CD4-positive, alpha-beta memory T cell (primary cell): ENCODE measurements at regions of chr7 and their contacts with region 1.

Region 1: DNA sequence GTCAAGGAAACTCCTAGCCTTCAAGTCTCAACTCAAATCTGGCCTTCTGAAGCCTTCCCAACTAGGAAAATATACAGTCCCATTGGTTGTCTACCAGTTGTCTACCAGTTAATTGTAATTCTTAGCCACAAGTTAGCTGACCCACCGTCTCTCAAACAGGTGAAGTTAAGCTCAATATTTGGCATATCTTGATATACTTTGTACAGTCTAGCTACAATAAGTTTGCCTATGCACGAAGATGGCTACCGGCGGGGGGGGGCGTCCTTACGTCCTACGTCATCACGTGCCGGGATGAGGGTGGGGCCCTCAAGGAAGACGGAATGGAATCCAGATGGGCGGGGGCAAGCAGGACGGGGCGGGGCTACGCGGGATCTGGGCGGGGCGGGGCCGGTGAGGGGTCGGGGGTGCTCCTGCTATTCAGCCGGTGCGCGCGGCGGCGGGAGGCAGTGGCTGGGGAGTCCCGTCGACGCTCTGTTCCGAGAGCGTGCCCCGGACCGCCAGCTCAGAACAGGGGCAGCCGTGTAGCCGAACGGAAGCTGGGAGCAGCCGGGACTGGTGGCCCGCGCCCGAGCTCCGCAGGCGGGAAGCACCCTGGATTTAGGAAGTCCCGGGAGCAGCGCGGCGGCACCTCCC is at the start of gene AHR:
- DNase-seq: peak; percentile 81 to 94 (median 84)
- H3K4me3 ChIP-seq: peak within 1 kb of the TSS; percentile 90 to 93
- H3K4me3 Mint-ChIP-seq: peak within 1 kb of the TSS; percentile 92 to 100 (median 96)
- H3K27ac ChIP-seq: peak within 1 kb of the TSS; percentile 90
- H3K27ac Mint-ChIP-seq: peak within 1 kb of the TSS; percentile 86 to 100 (median 95)
- H3K4me1 ChIP-seq: peaks cover 43% of the 10 kb centered on the region
- H3K4me1 Mint-ChIP-seq: peaks cover 25 to 36% (median 27%) of the 10 kb centered on the region in 4 donors
- H3K27me3 ChIP-seq: no peaks in the 10 kb centered on the region
- H3K27me3 Mint-ChIP-seq: no peaks in the 10 kb centered on the region
- total RNA-seq, gene AHR: 35.2 to 38.8 TPM

Region 2: GRCh38 chr7:16645593-16646471 is 652.5 kb before region 1 on chr7 and contains the starts of genes ANKMY2 and BZW2:
- CTCF ChIA-PET with region 1: no interaction called
- POLR2A ChIA-PET with region 1: interaction called, 5 read pairs
- intact Hi-C with region 1: loop called (anchors 1 kb)
- DNase-seq: peak; percentile 93 to 96 (median 95)
- H3K4me3 ChIP-seq: peak within 1 kb of the TSS; percentile 89 to 96
- H3K4me3 Mint-ChIP-seq: peak within 1 kb of the TSS; percentile 97 to 100 (median 100)
- H3K27ac ChIP-seq: peak within 1 kb of the TSS; percentile 74
- H3K27ac Mint-ChIP-seq: peak within 1 kb of the TSS; percentile 94 to 99 (median 99)
- H3K4me1 ChIP-seq: peaks cover 49% of the 10 kb centered on the region
- H3K4me1 Mint-ChIP-seq: peaks cover 41 to 69% (median 53%) of the 10 kb centered on the region in 4 donors
- H3K27me3 ChIP-seq: no peaks in the 10 kb centered on the region
- H3K27me3 Mint-ChIP-seq: no peaks in the 10 kb centered on the region
- total RNA-seq, gene ANKMY2: 13.6 to 20.3 TPM
- total RNA-seq, gene BZW2: 18.6 to 18.7 TPM

Region 3: GRCh38 chr7:17009007-17009719 is 289.2 kb before region 1 on chr7:
- CTCF ChIA-PET with region 1: interaction called, 23 read pairs
- POLR2A ChIA-PET with region 1: interaction called, 17 read pairs
- intact Hi-C with region 1: loop called (anchors 1 kb)
- DNase-seq: peak in 4 of 5 donors; percentile 28 to 53 (median 38)
- H3K4me3 ChIP-seq: no peak overlapping the region
- H3K4me3 Mint-ChIP-seq: peak overlapping the region in 1 of 8 donors; percentile 19
- H3K27ac ChIP-seq: no peak overlapping the region
- H3K27ac Mint-ChIP-seq: peak overlapping the region in 5 of 7 donors; percentile 8 to 57 (median 26)
- H3K4me1 ChIP-seq: peaks cover 20% of the 10 kb centered on the region
- H3K4me1 Mint-ChIP-seq: peaks cover 14 to 29% (median 16%) of the 10 kb centered on the region in 4 donors
- H3K27me3 ChIP-seq: no peaks in the 10 kb centered on the region
- H3K27me3 Mint-ChIP-seq: peaks cover 0 to 2% of the 10 kb centered on the region in 2 donors

Region 4: DNA sequence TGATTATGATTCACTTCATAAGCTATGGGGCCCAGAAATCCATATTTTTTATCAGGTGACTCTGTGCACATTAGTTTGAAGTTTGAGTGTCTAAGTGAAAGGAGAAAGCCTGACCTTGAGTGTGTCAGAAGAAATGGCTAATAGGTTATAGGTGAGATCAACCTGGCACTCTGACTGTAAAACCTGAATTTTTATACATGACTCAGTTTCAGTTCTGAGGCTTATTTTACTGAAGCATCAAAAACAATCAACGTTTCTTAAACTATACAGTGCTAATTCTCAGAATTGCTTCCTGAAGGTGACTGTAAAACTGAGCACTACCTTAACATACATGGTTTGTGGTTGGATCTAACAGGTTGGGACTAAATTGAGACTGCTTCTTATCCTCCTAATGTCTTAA is 159.2 kb before region 1 on chr7:
- CTCF ChIA-PET with region 1: interaction called, 5 read pairs
- POLR2A ChIA-PET with region 1: interaction called, 67 read pairs
- intact Hi-C with region 1: loop called (anchors 2 kb)
- DNase-seq: peak in 3 of 5 donors; percentile 20 to 34 (median 31)
- H3K4me3 ChIP-seq: no peak overlapping the region
- H3K4me3 Mint-ChIP-seq: peak overlapping the region in 7 of 8 donors; percentile 45 to 85 (median 71)
- H3K27ac ChIP-seq: peak overlapping the region; percentile 55
- H3K27ac Mint-ChIP-seq: peak overlapping the region; percentile 83 to 96 (median 90)
- H3K4me1 ChIP-seq: peaks cover 73% of the 10 kb centered on the region
- H3K4me1 Mint-ChIP-seq: peaks cover 54 to 79% (median 58%) of the 10 kb centered on the region in 4 donors
- H3K27me3 ChIP-seq: no peaks in the 10 kb centered on the region
- H3K27me3 Mint-ChIP-seq: no peaks in the 10 kb centered on the region

Region 5: DNA sequence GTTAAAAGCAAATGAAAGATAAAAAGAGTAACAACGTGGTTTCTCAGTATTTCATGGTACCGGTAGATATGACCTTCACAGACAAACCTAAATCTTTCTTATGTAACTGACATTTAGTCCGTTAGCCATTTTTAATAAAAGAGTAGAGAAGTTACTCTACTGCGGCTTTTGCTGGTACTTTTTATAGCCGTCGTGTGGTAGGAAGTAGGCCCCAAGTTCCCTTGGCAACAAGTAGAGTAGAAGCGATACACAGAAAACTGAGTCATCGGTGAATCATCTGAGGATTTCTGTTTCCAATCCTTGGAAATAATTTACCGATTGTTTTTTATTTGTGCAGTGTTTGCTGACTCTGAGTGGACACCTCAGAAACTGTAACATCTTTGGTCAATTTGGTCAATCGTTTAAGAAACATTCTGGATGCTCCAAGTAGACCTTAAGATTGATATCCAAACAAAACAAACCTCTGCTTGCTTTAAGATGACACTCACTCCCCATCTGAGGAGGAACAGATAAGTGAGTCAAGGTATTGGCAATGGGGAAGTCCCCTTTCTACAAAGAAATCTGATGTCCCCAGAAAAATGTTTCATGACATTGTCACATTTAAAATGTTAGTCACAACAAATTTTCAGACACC is 63.8 kb before region 1 on chr7:
- CTCF ChIA-PET with region 1: interaction called, 7 read pairs
- POLR2A ChIA-PET with region 1: interaction called, 38 read pairs
- intact Hi-C with region 1: loop called (anchors 1 kb)
- DNase-seq: peak; percentile 84 to 92 (median 87)
- H3K4me3 ChIP-seq: peak overlapping the region; percentile 8 to 19
- H3K4me3 Mint-ChIP-seq: peak overlapping the region; percentile 73 to 89 (median 84)
- H3K27ac ChIP-seq: peak overlapping the region; percentile 93
- H3K27ac Mint-ChIP-seq: peak overlapping the region; percentile 98 to 100 (median 99)
- H3K4me1 ChIP-seq: peaks cover 34% of the 10 kb centered on the region
- H3K4me1 Mint-ChIP-seq: peaks cover 32 to 51% (median 39%) of the 10 kb centered on the region in 4 donors
- H3K27me3 ChIP-seq: no peaks in the 10 kb centered on the region
- H3K27me3 Mint-ChIP-seq: no peaks in the 10 kb centered on the region

Region 6: GRCh38 chr7:17940302-17940883 is 642.1 kb after region 1 on chr7 and contains the start of gene SNX13:
- CTCF ChIA-PET with region 1: no interaction called
- POLR2A ChIA-PET with region 1: interaction called, 3 read pairs
- intact Hi-C with region 1: loop called (anchors 2 kb)
- DNase-seq: peak; percentile 86 to 91 (median 88)
- H3K4me3 ChIP-seq: peak within 1 kb of the TSS; percentile 82 to 85
- H3K4me3 Mint-ChIP-seq: peak within 1 kb of the TSS; percentile 89 to 99 (median 97)
- H3K27ac ChIP-seq: peak within 1 kb of the TSS; percentile 90
- H3K27ac Mint-ChIP-seq: peak within 1 kb of the TSS; percentile 89 to 99 (median 99)
- H3K4me1 ChIP-seq: peaks cover 39% of the 10 kb centered on the region
- H3K4me1 Mint-ChIP-seq: peaks cover 29 to 59% (median 43%) of the 10 kb centered on the region in 4 donors
- H3K27me3 ChIP-seq: no peaks in the 10 kb centered on the region
- H3K27me3 Mint-ChIP-seq: no peaks in the 10 kb centered on the region
- total RNA-seq, gene SNX13: 34.6 to 36.0 TPM